ENCODE measurements at regions of chr7 and their contacts with region 1.

Region 1: GRCh38 chr7:100563809-100564400 is 9.8 kb downstream of the SAP25 start:
- DNase-seq: peak; percentile 95

Region 2: DNA sequence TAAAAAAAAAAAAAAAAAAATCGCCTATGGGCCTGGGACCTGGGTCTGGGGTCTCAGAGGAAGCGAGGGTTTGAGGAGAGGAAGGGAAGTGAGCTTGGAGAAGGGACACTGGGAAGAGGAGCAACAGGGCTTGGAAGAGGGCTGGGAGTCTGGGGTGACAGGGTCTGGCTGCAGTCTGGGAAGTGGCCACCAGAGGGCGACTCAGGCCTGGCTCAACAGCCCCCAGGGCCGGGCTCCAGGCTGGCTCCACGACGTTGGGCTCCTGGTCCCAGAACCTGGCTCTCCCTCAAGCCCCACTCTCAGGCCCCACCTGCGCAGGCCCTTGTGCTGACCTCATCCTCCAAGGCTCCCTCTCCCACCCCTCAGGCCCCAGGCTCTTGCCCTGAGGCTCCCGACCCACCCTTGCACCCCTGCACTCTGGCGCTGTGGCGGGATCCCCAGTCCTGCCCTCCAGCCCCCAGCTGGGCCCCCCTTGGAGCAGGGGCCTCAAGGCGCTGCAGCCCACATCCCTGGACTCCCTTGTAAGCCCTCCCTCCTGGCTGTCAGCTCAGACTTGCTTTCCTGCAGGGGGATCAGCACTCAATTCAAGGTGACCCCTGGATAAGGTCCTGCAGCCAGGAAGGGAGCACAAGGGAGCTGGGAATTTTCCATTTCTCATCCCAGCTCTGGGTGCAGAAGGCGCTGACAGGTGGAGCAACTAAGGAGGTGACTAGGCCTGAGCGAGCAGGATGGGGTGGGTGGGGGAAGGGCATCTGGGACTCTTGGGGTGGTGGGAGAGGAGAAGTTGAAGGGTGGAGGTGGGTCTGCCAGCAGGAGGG is 94.5 kb before region 1 on chr7:
- intact Hi-C with region 1: loop called (anchors 5 kb)
- DNase-seq: peak; percentile 95

Region 3: DNA sequence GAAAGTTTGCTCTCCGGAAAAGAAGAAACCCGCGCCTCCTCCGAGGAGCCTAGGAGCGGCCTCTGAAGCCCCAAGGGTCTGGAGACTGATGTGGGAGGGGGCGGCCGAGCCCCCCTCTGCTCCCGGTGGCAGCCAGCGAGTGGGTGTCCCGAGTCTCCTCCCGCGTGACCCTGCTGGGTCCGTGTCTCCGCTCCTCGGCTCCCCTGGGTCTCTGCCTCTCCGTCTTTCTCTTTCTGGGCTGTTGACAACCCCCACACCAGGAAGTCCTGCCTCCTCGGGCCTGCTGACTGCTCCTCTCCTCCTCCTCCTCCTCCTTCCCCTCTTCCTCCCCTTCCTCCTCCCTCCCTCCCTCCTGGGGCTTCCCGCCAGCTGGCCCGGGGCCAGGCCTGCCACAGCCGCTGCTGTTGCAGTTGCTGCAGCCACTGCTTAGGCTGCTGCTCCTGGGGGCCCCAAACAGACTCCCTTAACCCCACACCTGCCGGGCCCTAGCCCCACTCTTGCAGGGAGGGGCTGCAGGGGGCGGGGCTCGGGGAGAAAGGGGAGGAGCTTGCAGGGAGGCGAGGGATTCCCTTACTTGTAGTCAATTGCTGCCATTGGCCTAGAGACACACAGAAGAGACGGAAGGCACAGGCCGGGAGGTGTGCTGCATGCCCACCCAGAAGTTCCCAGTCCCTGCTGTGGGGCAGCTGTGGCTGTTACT is 84.8 kb before region 1 on chr7 and contains the start of gene TSC22D4:
- intact Hi-C with region 1: loop called (anchors 5 kb)
- DNase-seq: peak; percentile 97
- total RNA-seq, gene TSC22D4: 25.3 to 29.1 TPM

Region 4: DNA sequence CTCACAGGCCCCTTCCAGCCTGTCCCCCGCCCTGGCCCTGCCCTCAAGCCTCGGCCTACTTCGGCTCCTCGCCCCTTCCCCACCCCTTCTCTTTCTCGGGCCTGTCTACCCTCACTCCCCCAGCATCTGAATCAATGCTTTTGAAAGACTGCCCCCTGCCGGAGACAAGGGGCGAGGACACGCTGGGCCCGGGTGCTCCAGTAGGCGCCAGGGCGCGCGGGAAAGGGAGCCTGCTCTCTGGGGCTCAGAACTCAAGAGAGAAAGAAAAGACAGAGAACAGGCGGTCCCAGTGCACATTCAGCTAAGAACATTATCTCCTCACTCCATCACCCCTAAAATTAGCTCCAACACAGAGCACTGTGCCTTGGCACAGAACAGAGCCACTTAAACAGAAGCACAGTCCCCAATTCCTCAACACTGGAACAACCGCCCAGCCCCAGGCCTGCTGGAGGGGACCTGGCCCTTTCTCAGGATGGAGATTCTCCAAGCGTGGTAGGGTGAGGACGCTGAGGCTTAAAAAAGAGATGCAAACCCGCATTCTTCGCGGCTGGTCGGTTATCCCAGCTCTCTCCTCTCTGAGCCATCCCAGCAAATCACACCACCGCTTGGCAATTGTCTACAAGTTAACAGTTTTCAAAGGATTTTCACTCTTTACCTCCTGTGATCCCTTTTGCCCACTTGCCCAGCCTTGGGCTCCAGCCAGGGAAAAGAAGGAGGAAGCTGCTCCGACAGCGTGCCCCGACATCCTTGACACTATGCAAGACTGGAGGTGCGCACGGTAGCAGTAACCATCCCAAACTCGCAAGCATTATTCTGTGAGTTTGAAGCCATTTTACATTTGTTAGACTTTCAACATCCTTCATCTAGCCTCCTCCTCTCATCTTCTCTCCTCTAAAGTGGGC is 128.0 kb after region 1 on chr7:
- intact Hi-C with region 1: loop called (anchors 5 kb)
- DNase-seq: peak; percentile 94

Region 5: DNA sequence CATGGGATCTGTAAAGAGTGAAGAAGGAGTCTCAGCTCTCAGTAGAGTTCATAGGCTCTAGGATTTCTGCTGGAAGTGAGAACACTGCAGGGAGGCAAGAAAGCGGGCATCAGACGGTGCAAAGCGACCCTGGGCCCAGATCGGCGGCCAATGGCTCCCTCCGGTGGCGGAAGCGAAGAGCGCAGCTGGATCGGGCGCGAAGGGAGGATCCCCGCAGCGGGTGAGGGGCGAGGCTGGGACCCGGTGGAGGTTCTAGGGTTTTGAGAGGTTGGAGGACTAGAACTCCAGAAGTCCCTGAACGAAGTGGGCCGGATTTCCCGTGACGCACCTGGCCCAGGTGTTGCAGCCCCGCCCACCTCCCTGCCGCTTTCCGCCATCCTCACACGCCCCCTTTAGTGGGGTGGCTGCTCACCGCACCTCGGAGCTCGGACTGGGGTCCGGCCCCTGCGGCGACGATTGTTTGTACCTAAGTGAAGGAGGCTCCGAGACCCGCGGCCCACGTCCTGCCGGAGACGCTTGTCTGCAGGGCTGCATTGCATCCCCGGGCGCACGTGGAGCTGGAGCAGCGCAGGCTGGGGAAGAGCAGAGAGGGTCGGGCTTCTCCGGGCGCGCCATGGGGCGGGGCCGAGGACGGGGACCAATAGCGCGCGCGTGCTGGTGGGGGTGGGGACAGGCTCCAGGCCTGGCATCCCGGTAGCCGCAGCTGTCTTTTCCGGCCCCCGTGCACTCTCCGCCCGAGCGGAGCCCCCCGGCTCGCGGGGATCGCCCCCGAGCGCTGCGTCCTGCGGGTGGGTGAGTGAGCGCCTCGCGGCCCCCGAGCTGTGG is 288.4 kb after region 1 on chr7 and contains the start of gene SLC12A9:
- intact Hi-C with region 1: loop called in 1 of 2 experiments (anchors 10 kb)
- DNase-seq: peak; percentile 98
- total RNA-seq, gene SLC12A9: 15.6 to 22.8 TPM